ENCODE measurements at regions of chr1 and their contacts with region 1.

Region 1: GRCh38 chr1:6727535-6727934 is 25.9 kb upstream of the DNAJC11 start:
- DNase-seq: peak; percentile 35
- H3K4me3 ChIP-seq: no peak overlapping the region
- H3K27ac ChIP-seq: no peak overlapping the region
- H3K4me1 ChIP-seq: peaks cover 9% of the 10 kb centered on the region
- H3K27me3 ChIP-seq: no peaks in the 10 kb centered on the region
- CTCF ChIP-seq: peak; percentile 85

Region 2: GRCh38 chr1:6554031-6554906 is 173.3 kb before region 1 on chr1 and contains the start of gene NOL9:
- intact Hi-C with region 1: no loop called
- DNase-seq: peak; percentile 96
- H3K4me3 ChIP-seq: peak within 1 kb of the TSS; percentile 75
- H3K27ac ChIP-seq: peak within 1 kb of the TSS; percentile 82
- H3K4me1 ChIP-seq: peaks cover 29% of the 10 kb centered on the region
- H3K27me3 ChIP-seq: no peaks in the 10 kb centered on the region
- CTCF ChIP-seq: peak; percentile 97
- total RNA-seq, gene NOL9: 13.4 TPM

Region 3: GRCh38 chr1:6776895-6777294 is 49.4 kb after region 1 on chr1:
- intact Hi-C with region 1: no loop called
- DNase-seq: no peak
- H3K4me3 ChIP-seq: no peak overlapping the region
- H3K27ac ChIP-seq: no peak overlapping the region
- H3K4me1 ChIP-seq: peaks cover 4% of the 10 kb centered on the region
- H3K27me3 ChIP-seq: no peaks in the 10 kb centered on the region
- CTCF ChIP-seq: no peak

Region 4: DNA sequence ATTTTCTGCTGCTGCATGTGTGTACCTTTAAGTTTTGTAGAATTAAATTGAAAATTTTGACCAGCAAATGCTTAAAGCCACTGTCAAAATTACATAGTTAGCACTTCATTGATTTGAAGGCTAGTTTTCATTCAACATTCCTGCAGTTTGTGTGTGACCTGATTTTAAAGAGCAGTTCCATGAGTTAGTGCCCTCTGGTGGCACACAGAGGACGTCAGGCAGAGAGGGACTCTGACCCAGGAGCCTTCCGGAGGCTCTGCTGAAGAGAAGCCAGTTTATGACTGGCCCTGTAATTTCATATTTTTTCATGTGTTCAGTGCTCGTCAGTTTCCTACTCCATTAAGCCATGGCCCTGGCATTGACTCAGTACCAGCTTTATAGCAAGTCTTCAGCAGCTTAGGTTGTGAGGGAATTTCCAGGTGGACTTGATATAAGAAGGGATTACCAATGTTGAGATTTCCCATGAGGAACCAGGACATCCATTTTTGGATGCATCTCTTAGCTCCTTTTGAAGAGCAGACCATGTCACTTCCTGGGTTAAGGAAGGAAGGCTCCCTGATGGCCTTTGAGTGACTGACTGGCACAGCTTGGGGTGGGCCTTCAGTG is 162.4 kb after region 1 on chr1:
- intact Hi-C with region 1: loop called (anchors 10 kb)
- DNase-seq: no peak
- H3K4me3 ChIP-seq: no peak overlapping the region
- H3K27ac ChIP-seq: no peak overlapping the region
- H3K4me1 ChIP-seq: peaks cover 13% of the 10 kb centered on the region
- H3K27me3 ChIP-seq: no peaks in the 10 kb centered on the region
- CTCF ChIP-seq: peak; percentile 87

Region 5: DNA sequence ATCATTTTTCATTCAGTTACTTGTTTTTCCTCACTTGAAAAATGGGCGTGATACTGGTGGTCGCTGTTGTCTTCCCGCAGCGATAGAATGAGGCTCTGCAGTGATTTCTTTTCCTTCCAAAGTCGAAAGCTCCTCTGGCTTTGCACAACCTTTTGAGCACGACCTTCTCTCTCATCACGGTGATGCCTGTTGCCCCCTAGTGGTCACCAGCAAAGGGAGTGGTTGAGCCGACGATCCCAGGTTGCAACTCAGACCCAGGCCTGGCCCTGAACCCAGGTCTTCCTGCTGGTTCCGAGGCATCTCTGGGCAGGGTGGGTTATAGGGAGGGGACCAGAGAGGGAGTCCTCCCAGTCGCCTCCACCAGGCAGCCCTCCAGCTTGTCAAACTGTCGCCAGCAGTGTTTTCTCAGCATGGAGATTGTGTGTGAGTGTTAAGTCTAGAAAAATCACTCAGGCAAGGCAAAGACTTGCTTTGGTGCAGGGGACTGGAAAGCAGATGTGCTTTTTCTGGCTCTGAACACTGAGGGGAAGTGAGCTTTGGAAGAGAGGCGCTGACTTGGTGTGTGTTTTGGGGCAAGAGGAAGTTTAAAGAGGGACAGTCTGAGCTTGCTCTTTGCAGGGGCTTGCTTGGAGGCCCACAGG is 343.0 kb after region 1 on chr1:
- intact Hi-C with region 1: loop called (anchors 10 kb)
- DNase-seq: peak; percentile 51
- H3K4me3 ChIP-seq: peak overlapping the region; percentile 58
- H3K27ac ChIP-seq: no peak overlapping the region
- H3K4me1 ChIP-seq: peaks cover 9% of the 10 kb centered on the region
- H3K27me3 ChIP-seq: peaks cover 30% of the 10 kb centered on the region
- CTCF ChIP-seq: peak; percentile 85

Measured in left ventricle myocardium inferior (tissue), 1 donor.